A549 (cell line): ENCODE measurements at regions of chr2 and their contacts with region 1.

Region 1: DNA sequence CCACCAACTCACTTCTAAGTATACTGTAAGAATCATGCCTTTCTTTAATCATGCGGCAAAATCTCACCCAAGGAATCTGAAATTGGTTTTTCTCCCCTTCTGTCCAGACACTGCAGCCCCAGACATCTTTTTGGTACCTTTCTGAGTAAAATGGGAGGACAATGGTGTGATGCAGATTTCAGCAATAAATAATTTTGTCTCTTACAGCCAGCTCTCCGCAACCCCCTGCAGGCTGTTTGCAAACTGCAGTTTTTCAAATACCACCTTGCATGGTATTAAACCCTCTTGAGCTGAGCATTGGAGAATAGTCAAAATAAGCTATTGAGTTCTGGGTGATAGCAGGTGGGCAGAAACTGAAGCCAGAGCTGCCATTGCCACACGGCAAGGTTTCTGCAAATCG is 32.2 kb downstream of the GPR39 start:
- DNase-seq: peak in 1 of 2 experiments; percentile 41
- ATAC-seq: peak; percentile 82 to 86; a peak in 4 of 6 replicates
- H3K4me3 ChIP-seq: no peak overlapping the region
- H3K27ac ChIP-seq: no peak overlapping the region
- H3K4me1 ChIP-seq: no peaks in the 10 kb centered on the region
- CTCF ChIP-seq: peak; percentile 54
- EP300 ChIP-seq: no peak
- POLR2A ChIP-seq: no peak
- RAD21 ChIP-seq: peak; percentile 65 to 73

Region 2: GRCh38 chr2:132438691-132439090 is 10.1 kb before region 1 on chr2:
- CTCF ChIA-PET with region 1: interaction called, 11 read pairs
- POLR2A ChIA-PET with region 1: no interaction called
- DNase-seq: peak; percentile 82 to 91
- ATAC-seq: peak; percentile 95 to 98
- H3K4me3 ChIP-seq: no peak overlapping the region
- H3K27ac ChIP-seq: peak overlapping the region; percentile 65 to 92
- H3K4me1 ChIP-seq: peaks cover 49% of the 10 kb centered on the region
- CTCF ChIP-seq: no peak
- EP300 ChIP-seq: peak; percentile 43 to 63; a peak in 3 of 5 replicates
- POLR2A ChIP-seq: no peak
- RAD21 ChIP-seq: peak; percentile 20 to 29; a peak in 4 of 5 replicates